Motor neuron (in vitro differentiated cells): ENCODE measurements at regions of chr2 and their contacts with region 1.

Region 1: DNA sequence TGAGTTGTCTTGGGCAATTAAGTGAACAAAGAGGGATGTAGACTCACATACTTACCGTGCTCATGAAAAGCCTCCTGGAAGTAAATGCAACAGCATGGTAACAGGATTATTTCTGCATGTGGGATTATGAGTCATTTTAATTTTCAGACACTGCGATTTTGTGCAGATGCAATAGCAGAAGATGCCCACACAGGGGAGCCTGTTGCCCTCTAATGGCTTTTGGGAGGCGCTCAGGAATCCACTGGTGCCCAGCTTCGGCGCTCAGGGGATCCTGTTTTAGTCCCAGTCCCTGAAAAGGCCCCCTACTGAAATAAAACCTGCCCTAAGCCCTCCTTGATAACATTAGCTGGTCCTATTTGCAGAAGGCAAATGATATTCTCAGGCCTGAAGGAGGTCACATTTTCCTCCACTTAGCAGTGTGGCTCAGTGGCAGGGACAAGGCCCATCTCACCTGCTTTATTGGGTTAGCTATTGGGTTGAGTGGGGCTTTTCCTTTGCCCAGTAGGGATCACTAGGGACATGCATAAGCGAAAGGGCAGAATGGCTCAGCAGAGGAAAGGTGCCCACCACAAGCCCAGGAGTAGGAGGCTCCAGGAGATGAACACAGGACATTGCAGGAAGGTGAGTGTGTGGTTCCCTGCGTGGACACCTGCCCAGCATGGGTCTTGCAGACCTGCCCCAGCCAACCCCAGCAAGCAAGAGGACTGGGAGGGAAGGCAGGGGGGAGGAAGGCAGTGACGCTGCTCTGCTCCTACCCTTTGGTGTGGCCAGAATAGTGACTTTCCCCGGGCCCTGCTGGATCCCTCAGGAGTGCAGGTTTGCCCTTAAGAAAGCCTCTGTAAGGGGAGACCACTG is 26.5 kb upstream of the KCNS3 start:
- ATAC-seq: peak in 7 of 8 experiments; percentile 40 to 83 (median 78)
- H3K4me3 ChIP-seq: no peak overlapping the region
- H3K27ac ChIP-seq: no peak overlapping the region
- H3K4me1 ChIP-seq: no peaks in the 10 kb centered on the region

Region 2: DNA sequence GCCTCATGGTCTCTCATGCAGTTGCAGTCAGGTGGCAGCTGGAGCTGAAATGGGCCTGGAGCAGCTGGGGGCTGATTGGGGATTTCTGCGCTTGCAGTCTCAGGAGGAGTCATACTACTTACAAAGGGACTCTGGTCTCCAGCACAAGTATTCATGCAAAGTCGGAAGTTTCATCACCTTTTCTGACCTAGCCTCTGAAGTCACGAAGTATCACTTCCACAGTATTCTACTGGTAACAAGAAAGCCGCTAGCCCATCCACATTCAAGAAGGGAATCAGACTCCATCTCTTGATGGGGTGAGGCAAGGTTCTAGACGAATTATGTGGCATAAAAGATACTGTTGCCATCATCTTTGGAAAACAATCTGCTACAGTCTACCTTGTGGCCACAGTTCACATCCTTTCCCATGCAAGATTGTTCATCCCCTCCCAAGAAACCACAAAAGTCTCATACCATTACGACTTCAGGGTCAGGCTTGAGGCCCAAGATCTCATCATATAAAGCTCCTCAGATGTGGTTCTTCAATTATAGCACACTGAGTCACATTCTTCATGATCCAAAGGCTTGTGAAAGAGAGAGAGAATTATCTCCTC is 193.6 kb before region 1 on chr2:
- in situ Hi-C with region 1: no loop called
- ATAC-seq: peak in 1 of 8 experiments; percentile 30
- H3K4me3 ChIP-seq: no peak overlapping the region
- H3K27ac ChIP-seq: no peak overlapping the region
- H3K4me1 ChIP-seq: no peaks in the 10 kb centered on the region

Region 3: GRCh38 chr2:18149645-18150246 is 297.8 kb after region 1 on chr2:
- in situ Hi-C with region 1: loop called in 3 of 9 experiments (anchors 25 kb)
- ATAC-seq: peak in 3 of 8 experiments; percentile 56 to 73 (median 58)
- H3K4me3 ChIP-seq: no peak overlapping the region
- H3K27ac ChIP-seq: no peak overlapping the region
- H3K4me1 ChIP-seq: no peaks in the 10 kb centered on the region

Region 4: DNA sequence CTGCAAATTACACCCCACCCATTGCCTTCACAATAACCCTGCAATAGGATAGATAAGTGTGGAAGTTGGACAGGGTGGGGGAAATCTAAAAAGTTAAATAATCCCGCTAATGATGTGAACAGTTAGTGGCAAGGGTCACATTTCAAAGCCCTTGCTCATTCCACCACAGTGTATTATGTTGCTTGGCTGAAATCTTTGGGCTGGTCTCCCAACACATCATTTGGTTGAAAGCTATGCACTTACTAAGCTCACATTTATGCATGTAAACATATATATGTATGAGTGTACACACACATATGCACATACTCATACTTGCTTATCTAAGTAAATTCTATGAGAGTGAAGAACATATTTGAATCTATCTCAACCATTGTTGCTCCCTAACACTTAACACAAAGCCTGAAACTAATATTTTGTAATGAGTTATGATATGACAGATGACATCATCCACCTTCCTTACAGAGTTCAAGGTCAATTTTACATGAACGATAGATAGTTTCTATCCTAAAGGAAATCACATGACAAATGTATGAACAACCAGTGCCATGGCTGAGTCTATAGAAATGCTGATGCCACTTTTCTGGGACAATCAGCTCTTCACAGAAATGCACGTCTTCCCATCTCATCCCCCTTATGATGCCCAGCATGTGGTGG is 510.9 kb after region 1 on chr2:
- in situ Hi-C with region 1: loop called in 2 of 9 experiments (anchors 25 kb)
- ATAC-seq: peak in 3 of 8 experiments; percentile 50 to 98 (median 88)
- H3K4me3 ChIP-seq: no peak overlapping the region
- H3K27ac ChIP-seq: no peak overlapping the region
- H3K4me1 ChIP-seq: peaks cover 3 to 6% of the 10 kb centered on the region in 2 donors

Region 5: GRCh38 chr2:18387441-18388206 is 535.7 kb after region 1 on chr2:
- in situ Hi-C with region 1: loop called in 6 of 9 experiments (anchors 10 to 25 kb)
- ATAC-seq: peak; percentile 77 to 98 (median 91)
- H3K4me3 ChIP-seq: no peak overlapping the region
- H3K27ac ChIP-seq: no peak overlapping the region
- H3K4me1 ChIP-seq: peaks cover 0 to 4% of the 10 kb centered on the region in 2 donors

Region 6: DNA sequence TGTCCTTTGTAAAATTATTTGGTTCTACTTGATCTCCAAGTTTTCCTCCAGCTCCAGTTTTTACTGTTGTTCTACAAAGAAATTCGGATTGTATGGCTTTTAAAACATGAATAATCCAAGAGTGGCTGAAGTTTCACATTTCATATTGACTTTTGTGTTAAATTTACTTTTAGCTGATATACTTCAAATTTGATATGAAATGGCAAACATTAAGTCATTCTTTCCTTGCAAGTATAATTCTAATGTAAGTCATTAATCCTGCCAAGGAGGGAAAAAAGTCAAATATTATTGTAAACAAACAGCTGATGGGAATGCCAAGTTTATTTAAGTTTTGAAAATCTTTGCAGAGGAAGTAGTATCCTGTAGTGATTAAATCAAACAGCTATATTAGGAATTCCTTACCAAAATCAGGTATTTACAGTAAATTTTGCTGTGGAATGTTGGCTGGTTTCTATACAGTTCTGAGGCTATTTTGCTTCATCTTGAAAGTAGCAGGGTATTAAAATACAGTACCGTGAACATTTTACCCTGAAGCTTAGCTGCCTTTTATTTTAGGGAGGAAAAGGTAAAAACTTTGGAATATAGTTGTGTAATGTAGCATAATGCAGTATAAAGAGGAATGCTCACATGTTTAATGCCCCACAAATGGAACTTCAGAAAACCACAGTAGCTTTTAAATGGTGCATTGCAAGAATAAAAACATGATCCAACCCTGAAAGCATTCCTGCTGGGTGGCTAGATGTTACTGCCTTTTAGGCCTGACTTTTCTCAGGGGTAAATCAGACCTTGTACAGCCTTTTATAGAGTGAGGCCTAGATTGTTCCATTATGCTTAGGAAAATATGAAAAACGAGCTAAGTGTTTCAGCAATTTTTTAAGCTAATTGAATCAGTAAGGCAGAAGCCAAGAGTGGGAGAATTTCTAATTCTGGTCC is 800.1 kb after region 1 on chr2:
- in situ Hi-C with region 1: no loop called
- ATAC-seq: peak in 3 of 8 experiments; percentile 16 to 36 (median 21)
- H3K4me3 ChIP-seq: no peak overlapping the region
- H3K27ac ChIP-seq: no peak overlapping the region
- H3K4me1 ChIP-seq: no peaks in the 10 kb centered on the region